GM13976 (cell line): ENCODE measurements at regions of chr5 and their contacts with region 1.

Region 1: DNA sequence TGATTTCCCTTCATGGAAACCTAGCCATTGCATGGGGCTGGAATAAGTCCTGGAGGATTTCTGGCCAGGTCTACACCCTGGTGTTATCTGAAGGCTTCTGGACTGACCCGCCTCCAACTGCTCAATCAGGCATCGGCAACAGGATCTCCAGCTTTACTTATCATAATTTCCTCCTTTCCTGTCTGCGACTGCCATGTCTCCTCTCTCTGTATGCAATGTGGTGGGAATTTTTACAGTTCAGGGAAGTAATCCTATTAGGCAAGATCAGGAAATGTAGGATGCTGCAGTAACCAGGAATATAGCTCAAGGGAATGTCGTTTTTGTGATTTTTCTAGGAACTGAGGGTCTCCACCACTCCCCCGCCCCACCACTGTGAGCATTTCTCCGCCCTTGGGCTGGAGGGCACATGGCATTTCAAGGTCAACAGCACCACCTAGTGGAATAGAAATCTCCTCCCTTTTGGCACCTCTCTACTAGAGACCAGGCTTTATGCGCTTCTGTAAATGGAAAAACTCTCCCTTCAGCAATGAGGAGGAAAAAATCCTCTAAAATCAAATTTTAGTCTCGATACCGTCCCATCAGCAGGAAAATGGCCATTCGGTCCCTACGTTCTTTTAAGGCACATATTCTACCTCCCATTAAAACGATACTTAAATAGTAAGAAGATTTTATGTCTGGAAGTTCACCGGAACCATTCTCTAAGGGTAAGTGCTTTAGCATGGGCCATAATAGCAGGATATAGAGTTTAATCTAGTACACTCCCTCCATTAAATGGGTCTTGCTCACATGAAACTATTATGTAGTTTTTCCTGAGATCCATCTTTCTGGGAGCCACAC is 93.0 kb downstream of the YTHDC2 start:
- DNase-seq: peak; percentile 25
- CTCF ChIP-seq: peak; percentile 58

Region 2: DNA sequence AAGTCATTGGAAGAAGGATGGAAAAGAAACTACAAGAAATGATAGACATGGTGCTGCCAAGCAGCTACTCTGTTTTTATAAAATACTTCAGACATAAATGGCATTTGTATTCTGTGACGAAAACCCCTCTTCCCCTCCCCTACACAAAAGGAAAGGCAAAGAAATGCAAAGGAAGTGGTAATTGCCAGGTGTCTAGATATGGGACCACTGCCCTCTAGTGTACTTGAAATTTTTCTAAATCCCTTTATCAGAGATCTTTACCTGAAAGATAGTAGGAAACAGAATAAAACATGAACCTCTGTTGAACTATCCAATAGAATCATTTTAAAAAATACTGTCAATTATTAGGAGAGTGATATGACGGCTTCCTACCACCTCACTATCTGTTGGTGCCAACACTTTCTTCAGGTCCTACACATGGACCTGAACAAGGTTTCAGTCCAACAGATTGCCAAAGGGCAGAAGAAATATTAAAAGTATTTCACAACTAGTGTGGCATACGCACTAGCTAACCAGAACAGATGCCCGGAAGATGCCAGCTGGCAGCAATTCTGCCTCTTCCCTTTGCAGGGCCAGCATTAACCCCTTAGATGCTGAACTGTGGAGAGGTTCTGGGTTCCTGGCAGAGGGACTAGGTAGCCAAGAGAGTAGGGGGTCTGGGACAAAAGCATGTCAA is 275.8 kb before region 1 on chr5:
- in situ Hi-C with region 1: loop called (anchors 25 kb)
- DNase-seq: peak; percentile 37
- CTCF ChIP-seq: no peak